ENCODE measurements at regions of chr6 and their contacts with region 1.

Region 1: DNA sequence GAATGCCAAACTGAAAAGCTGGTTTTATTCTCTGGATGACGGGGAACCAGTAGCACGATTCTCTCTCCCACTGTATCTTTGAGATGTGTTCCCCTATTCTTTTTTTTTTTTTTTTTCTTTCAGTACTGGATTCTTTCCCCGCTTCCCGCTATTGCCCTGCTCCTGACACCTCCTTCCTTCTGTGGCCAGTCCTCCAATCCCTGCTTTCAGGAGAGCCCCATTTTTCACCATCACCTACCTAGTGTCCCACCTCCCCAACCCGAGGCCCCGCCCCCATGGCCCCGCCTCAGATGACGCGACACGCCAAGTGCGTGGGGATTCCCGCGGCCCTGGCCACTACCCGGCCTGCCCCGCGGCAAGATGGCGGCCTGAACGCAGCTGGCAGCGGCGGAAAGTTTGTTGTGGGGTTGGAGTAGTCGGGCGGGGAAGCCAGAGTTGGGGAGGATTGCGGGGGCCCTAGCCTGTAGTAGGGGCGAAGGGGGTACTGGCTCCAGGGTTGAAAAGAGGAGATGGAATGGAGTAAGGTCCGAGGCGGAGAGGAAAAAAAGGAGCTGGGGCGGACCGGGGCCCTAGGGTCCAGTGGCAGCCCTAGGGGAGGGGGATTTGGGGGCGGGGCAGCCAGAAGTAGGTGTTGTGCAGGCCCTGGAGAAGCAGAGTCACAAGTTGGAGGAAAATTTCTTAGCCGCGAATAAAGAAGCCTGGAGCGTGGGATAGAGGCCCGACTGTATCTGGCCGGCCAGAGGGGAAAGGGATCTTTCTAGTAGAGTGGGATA is at the start of gene TJAP1:
- DNase-seq: peak; percentile 73 to 93
- H3K4me3 ChIP-seq: peak within 1 kb of the TSS; percentile 91
- H3K27ac ChIP-seq: peak within 1 kb of the TSS; percentile 34
- H3K4me1 ChIP-seq: peaks cover 53% of the 10 kb centered on the region
- H3K27me3 ChIP-seq: no peaks in the 10 kb centered on the region
- CTCF ChIP-seq: no peak
- total RNA-seq, gene TJAP1: 50.5 and 60.9 TPM in 2 replicates

Region 2: DNA sequence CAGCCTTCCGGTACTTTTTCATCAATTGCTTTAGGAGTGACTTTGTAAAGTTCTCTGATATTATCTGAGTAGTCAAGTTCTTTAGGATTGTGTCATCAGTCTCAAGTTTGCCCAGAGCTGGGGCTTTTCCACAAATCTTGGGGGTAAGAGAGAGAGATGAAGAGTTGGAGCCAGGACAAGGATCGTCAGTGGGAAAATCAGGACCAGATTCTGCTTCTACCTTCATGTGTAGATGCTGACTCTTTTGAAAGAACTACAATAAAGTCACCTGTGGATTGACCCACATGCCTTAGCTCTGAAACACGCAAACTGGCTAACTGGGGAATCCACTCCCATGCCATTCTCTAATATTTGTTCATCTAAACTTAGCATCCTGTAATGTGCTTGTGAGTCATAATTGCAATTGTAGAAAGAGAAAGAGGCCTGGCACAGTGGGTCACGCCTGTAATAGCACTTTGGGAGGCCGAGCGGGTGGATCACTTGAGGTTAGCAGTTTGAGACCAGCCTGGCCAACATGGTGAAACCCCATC is 711.2 kb before region 1 on chr6:
- CTCF ChIA-PET with region 1: no interaction called
- POLR2A ChIA-PET with region 1: no interaction called
- intact Hi-C with region 1: no loop called
- DNase-seq: peak; percentile 40 to 92
- H3K4me3 ChIP-seq: no peak overlapping the region
- H3K27ac ChIP-seq: peak overlapping the region; percentile 63
- H3K4me1 ChIP-seq: peaks cover 21% of the 10 kb centered on the region
- H3K27me3 ChIP-seq: no peaks in the 10 kb centered on the region
- CTCF ChIP-seq: no peak

Region 3: GRCh38 chr6:43386492-43386891 is 90.9 kb before region 1 on chr6:
- CTCF ChIA-PET with region 1: no interaction called
- POLR2A ChIA-PET with region 1: interaction called, 12 read pairs
- intact Hi-C with region 1: no loop called
- DNase-seq: no peak
- H3K4me3 ChIP-seq: no peak overlapping the region
- H3K27ac ChIP-seq: no peak overlapping the region
- H3K4me1 ChIP-seq: no peaks in the 10 kb centered on the region
- H3K27me3 ChIP-seq: no peaks in the 10 kb centered on the region
- CTCF ChIP-seq: peak; percentile 72

Region 4: GRCh38 chr6:43412541-43412940 is 64.9 kb before region 1 on chr6:
- CTCF ChIA-PET with region 1: no interaction called
- POLR2A ChIA-PET with region 1: no interaction called
- intact Hi-C with region 1: no loop called
- DNase-seq: no peak
- H3K4me3 ChIP-seq: no peak overlapping the region
- H3K27ac ChIP-seq: no peak overlapping the region
- H3K4me1 ChIP-seq: no peaks in the 10 kb centered on the region
- H3K27me3 ChIP-seq: no peaks in the 10 kb centered on the region
- CTCF ChIP-seq: no peak